ENCODE measurements at regions of chr1 and their contacts with region 1.

Region 1: DNA sequence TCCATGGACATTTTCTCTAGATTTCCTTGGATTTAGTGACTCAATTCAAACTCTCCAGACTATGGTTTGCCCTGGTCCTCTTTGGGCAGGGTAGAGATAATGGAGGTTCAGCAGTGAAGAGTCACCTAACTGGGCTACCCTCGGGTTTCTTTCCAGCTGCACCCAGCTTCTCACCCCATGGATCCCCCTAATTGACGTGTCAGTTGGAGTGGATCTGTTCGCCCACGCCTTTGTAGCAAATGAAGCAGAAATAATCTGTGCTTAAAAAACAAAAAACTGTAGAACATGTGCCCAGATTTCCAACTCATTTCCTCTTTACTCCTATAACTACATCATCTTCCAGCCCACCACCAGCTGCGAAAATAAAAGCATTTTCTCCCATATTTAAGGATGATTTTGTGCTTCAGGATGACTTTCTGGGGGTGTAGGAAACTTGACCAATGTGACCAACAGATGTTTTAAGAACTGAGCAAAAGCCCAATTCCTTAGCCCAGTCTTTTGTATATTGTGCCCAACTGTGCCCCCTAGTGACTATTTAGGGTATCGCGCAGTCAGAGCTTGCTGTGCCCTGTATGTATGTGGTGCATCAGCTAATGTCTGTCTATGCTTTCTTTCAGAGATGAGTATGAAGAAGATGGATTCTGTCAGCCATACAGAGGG is 66.5 kb upstream of the UBE2U start:
- DNase-seq: peak; percentile 95
- H3K4me3 ChIP-seq: no peak overlapping the region
- H3K27ac ChIP-seq: peak overlapping the region; percentile 72
- H3K27me3 ChIP-seq: no peaks in the 10 kb centered on the region
- CTCF ChIP-seq: peak; percentile 90

Region 2: GRCh38 chr1:63691701-63692425 is 445.0 kb before region 1 on chr1:
- in situ Hi-C with region 1: loop called (anchors 25 kb)
- DNase-seq: peak; percentile 85
- H3K4me3 ChIP-seq: no peak overlapping the region
- H3K27ac ChIP-seq: no peak overlapping the region
- H3K27me3 ChIP-seq: no peaks in the 10 kb centered on the region
- CTCF ChIP-seq: peak; percentile 82